H1 (cell line): ENCODE measurements at regions of chr1 and their contacts with region 1.

Region 1: GRCh38 chr1:186915555-186915954 is 86.8 kb downstream of the PLA2G4A start:
- DNase-seq: no peak
- H3K4me3 ChIP-seq: no peak overlapping the region
- H3K27ac ChIP-seq: no peak overlapping the region
- H3K4me1 ChIP-seq: no peaks in the 10 kb centered on the region
- H3K27me3 ChIP-seq: no peaks in the 10 kb centered on the region
- CTCF ChIP-seq: no peak
- EP300 ChIP-seq: no peak
- POLR2A ChIP-seq: no peak
- RAD21 ChIP-seq: peak; percentile 11 to 17; a peak in 2 of 4 replicates

Region 2: GRCh38 chr1:186648613-186649012 is 266.9 kb before region 1 on chr1:
- CTCF ChIA-PET with region 1: no interaction called
- POLR2A ChIA-PET with region 1: no interaction called
- DNase-seq: no peak
- H3K4me3 ChIP-seq: no peak overlapping the region
- H3K27ac ChIP-seq: no peak overlapping the region
- H3K4me1 ChIP-seq: 0 out of 7 replicates have a peak, but pooled peaks cover 0 to 3% (median 0%) of the 10 kb centered on the region in 4 experiments
- H3K27me3 ChIP-seq: no peaks in the 10 kb centered on the region
- CTCF ChIP-seq: no peak
- EP300 ChIP-seq: no peak
- POLR2A ChIP-seq: no peak
- RAD21 ChIP-seq: no peak

Region 3: DNA sequence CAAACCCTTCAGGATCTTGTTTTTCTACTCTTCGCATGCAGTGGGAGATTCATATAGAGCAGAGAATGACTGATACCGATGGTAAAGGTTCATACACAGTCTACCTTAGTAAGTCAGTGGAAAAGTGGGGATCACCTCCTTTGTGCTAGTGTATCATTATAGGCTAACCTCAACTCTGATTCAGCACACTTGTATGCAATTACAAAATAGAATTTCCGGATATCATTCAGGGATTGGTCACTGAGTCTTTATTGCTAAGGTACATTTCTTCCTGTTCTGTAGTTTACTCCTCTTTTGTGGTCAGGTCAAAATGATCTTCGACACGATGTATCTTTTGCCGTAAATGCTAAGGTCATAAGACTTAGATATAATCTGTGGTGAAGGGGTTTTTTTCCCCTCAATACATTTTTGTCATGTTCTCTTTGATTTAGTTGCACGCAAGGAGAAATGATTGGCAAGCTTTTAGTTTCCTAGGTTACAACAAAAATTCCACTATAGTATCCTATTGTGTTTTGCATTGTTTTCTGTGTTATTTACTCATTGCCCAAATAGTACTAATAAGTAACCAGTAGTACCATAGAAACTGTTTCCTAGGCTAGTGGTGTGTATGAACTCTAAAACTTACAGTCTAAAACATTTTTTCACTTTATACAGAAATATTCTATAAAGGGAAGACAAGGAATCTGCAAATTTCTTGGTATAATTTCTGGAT is 122.5 kb before region 1 on chr1:
- CTCF ChIA-PET with region 1: no interaction called
- POLR2A ChIA-PET with region 1: no interaction called
- DNase-seq: no peak
- H3K4me3 ChIP-seq: no peak overlapping the region
- H3K27ac ChIP-seq: no peak overlapping the region
- H3K4me1 ChIP-seq: no peaks in the 10 kb centered on the region
- H3K27me3 ChIP-seq: no peaks in the 10 kb centered on the region
- CTCF ChIP-seq: no peak
- EP300 ChIP-seq: no peak
- POLR2A ChIP-seq: no peak
- RAD21 ChIP-seq: no peak

Region 4: GRCh38 chr1:186904361-186904760 is 11.2 kb before region 1 on chr1:
- CTCF ChIA-PET with region 1: interaction called, 12 read pairs
- POLR2A ChIA-PET with region 1: no interaction called
- DNase-seq: no peak
- H3K4me3 ChIP-seq: no peak overlapping the region
- H3K27ac ChIP-seq: no peak overlapping the region
- H3K4me1 ChIP-seq: no peaks in the 10 kb centered on the region
- H3K27me3 ChIP-seq: no peaks in the 10 kb centered on the region
- CTCF ChIP-seq: no peak
- EP300 ChIP-seq: no peak
- POLR2A ChIP-seq: no peak
- RAD21 ChIP-seq: no peak

Region 5: GRCh38 chr1:186927884-186928283 is 12.3 kb after region 1 on chr1:
- CTCF ChIA-PET with region 1: interaction called, 33 read pairs
- POLR2A ChIA-PET with region 1: no interaction called
- DNase-seq: no peak
- H3K4me3 ChIP-seq: no peak overlapping the region
- H3K27ac ChIP-seq: no peak overlapping the region
- H3K4me1 ChIP-seq: no peaks in the 10 kb centered on the region; a peak in 1 of 7 replicates
- H3K27me3 ChIP-seq: peaks cover 0 to 1% (median 0%) of the 10 kb centered on the region in 4 experiments; a peak in 1 of 7 replicates
- CTCF ChIP-seq: no peak
- EP300 ChIP-seq: no peak
- POLR2A ChIP-seq: no peak
- RAD21 ChIP-seq: no peak

Region 6: GRCh38 chr1:186994897-186995296 is 79.3 kb after region 1 on chr1:
- CTCF ChIA-PET with region 1: interaction called, 11 read pairs
- POLR2A ChIA-PET with region 1: no interaction called
- DNase-seq: no peak
- H3K4me3 ChIP-seq: no peak overlapping the region
- H3K27ac ChIP-seq: no peak overlapping the region
- H3K4me1 ChIP-seq: 0 out of 7 replicates have a peak, but pooled peaks cover 0 to 2% (median 0%) of the 10 kb centered on the region in 4 experiments
- H3K27me3 ChIP-seq: no peaks in the 10 kb centered on the region
- CTCF ChIP-seq: no peak
- EP300 ChIP-seq: no peak
- POLR2A ChIP-seq: no peak
- RAD21 ChIP-seq: no peak